ENCODE measurements at regions of chr12 and their contacts with region 1.

Region 1: GRCh38 chr12:42372154-42372791 is 46.3 kb downstream of the PPHLN1 start:
- DNase-seq: no peak
- ATAC-seq: peak; percentile 94
- H3K4me3 Mint-ChIP-seq: no peak overlapping the region
- H3K27ac Mint-ChIP-seq: no peak overlapping the region
- H3K4me1 Mint-ChIP-seq: peaks cover 16% of the 10 kb centered on the region
- H3K27me3 Mint-ChIP-seq: no peaks in the 10 kb centered on the region
- CTCF ChIP-seq: peak; percentile 30

Region 2: GRCh38 chr12:40946612-40947194 is 1425.6 kb before region 1 on chr12:
- CTCF ChIA-PET with region 1: interaction called, 3 read pairs
- POLR2A ChIA-PET with region 1: no interaction called
- intact Hi-C with region 1: loop called (anchors 1 kb)
- DNase-seq: no peak
- ATAC-seq: peak; percentile 25
- H3K4me3 Mint-ChIP-seq: no peak overlapping the region
- H3K27ac Mint-ChIP-seq: no peak overlapping the region
- H3K4me1 Mint-ChIP-seq: no peaks in the 10 kb centered on the region
- H3K27me3 Mint-ChIP-seq: peaks cover 7% of the 10 kb centered on the region
- CTCF ChIP-seq: no peak

Region 3: GRCh38 chr12:41277116-41277945 is 1094.9 kb before region 1 on chr12:
- CTCF ChIA-PET with region 1: interaction called, 12 read pairs
- POLR2A ChIA-PET with region 1: no interaction called
- intact Hi-C with region 1: loop called (anchors 1 kb)
- DNase-seq: no peak
- ATAC-seq: peak; percentile 37
- H3K4me3 Mint-ChIP-seq: no peak overlapping the region
- H3K27ac Mint-ChIP-seq: no peak overlapping the region
- H3K4me1 Mint-ChIP-seq: peaks cover 3% of the 10 kb centered on the region
- H3K27me3 Mint-ChIP-seq: peaks cover 5% of the 10 kb centered on the region
- CTCF ChIP-seq: no peak

Region 4: GRCh38 chr12:42129595-42130204 is 242.6 kb before region 1 on chr12:
- CTCF ChIA-PET with region 1: interaction called, 5 read pairs
- POLR2A ChIA-PET with region 1: no interaction called
- intact Hi-C with region 1: loop called (anchors 1 kb)
- DNase-seq: no peak
- ATAC-seq: peak; percentile 52
- H3K4me3 Mint-ChIP-seq: no peak overlapping the region
- H3K27ac Mint-ChIP-seq: no peak overlapping the region
- H3K4me1 Mint-ChIP-seq: peaks cover 15% of the 10 kb centered on the region
- H3K27me3 Mint-ChIP-seq: no peaks in the 10 kb centered on the region
- CTCF ChIP-seq: no peak

Region 5: GRCh38 chr12:43282106-43282505 is 909.8 kb after region 1 on chr12:
- CTCF ChIA-PET with region 1: interaction called, 3 read pairs
- POLR2A ChIA-PET with region 1: no interaction called
- intact Hi-C with region 1: loop called (anchors 5 kb)
- DNase-seq: no peak
- ATAC-seq: no peak
- H3K4me3 Mint-ChIP-seq: no peak overlapping the region
- H3K27ac Mint-ChIP-seq: no peak overlapping the region
- H3K4me1 Mint-ChIP-seq: peaks cover 16% of the 10 kb centered on the region
- H3K27me3 Mint-ChIP-seq: no peaks in the 10 kb centered on the region
- CTCF ChIP-seq: no peak